ENCODE measurements at regions of chr15 and their contacts with region 1.

Region 1: GRCh38 chr15:61834076-61834697 is 226.1 kb downstream of the VPS13C start:
- DNase-seq: peak; percentile 60 to 78
- ATAC-seq: peak; percentile 60 to 73
- H3K4me3 ChIP-seq: no peak overlapping the region
- H3K27ac ChIP-seq: peak overlapping the region in 1 of 4 donors; percentile 35
- H3K4me1 ChIP-seq: peaks cover 0 to 29% of the 10 kb centered on the region in 2 donors
- H3K27me3 ChIP-seq: no peaks in the 10 kb centered on the region
- CTCF ChIP-seq: peak; percentile 71 to 96 (median 91)
- POLR2A ChIP-seq: no peak

Region 2: GRCh38 chr15:60507596-60508424 is 1326.4 kb before region 1 on chr15:
- in situ Hi-C with region 1: loop called in 1 of 4 experiments (anchors 25 kb)
- intact Hi-C with region 1: no loop called
- DNase-seq: peak; percentile 21 to 40
- ATAC-seq: peak; percentile 76 to 83
- H3K4me3 ChIP-seq: no peak overlapping the region
- H3K27ac ChIP-seq: peak overlapping the region; percentile 54 to 64 (median 60)
- H3K4me1 ChIP-seq: peaks cover 28 to 35% of the 10 kb centered on the region in 2 donors
- H3K27me3 ChIP-seq: no peaks in the 10 kb centered on the region
- CTCF ChIP-seq: peak; percentile 86 to 94 (median 88)
- POLR2A ChIP-seq: no peak

Region 3: GRCh38 chr15:60932051-60932915 is 901.9 kb before region 1 on chr15:
- in situ Hi-C with region 1: loop called in 1 of 4 experiments (anchors 25 kb)
- intact Hi-C with region 1: no loop called
- DNase-seq: peak; percentile 89 to 96
- ATAC-seq: peak; percentile 76 to 94
- H3K4me3 ChIP-seq: no peak overlapping the region
- H3K27ac ChIP-seq: peak overlapping the region; percentile 54 to 83 (median 65)
- H3K4me1 ChIP-seq: peaks cover 52 to 74% of the 10 kb centered on the region in 2 donors
- H3K27me3 ChIP-seq: no peaks in the 10 kb centered on the region
- CTCF ChIP-seq: peak; percentile 28 to 68 (median 62)
- POLR2A ChIP-seq: no peak

Region 4: GRCh38 chr15:61169904-61170695 is 664.1 kb before region 1 on chr15:
- in situ Hi-C with region 1: loop called in 3 of 4 experiments (anchors 10 to 25 kb)
- intact Hi-C with region 1: no loop called
- DNase-seq: no peak
- ATAC-seq: no peak
- H3K4me3 ChIP-seq: no peak overlapping the region
- H3K27ac ChIP-seq: peak overlapping the region in 1 of 4 donors; percentile 8
- H3K4me1 ChIP-seq: peaks cover 27 to 50% of the 10 kb centered on the region in 2 donors
- H3K27me3 ChIP-seq: no peaks in the 10 kb centered on the region
- CTCF ChIP-seq: no peak
- POLR2A ChIP-seq: no peak

Region 5: DNA sequence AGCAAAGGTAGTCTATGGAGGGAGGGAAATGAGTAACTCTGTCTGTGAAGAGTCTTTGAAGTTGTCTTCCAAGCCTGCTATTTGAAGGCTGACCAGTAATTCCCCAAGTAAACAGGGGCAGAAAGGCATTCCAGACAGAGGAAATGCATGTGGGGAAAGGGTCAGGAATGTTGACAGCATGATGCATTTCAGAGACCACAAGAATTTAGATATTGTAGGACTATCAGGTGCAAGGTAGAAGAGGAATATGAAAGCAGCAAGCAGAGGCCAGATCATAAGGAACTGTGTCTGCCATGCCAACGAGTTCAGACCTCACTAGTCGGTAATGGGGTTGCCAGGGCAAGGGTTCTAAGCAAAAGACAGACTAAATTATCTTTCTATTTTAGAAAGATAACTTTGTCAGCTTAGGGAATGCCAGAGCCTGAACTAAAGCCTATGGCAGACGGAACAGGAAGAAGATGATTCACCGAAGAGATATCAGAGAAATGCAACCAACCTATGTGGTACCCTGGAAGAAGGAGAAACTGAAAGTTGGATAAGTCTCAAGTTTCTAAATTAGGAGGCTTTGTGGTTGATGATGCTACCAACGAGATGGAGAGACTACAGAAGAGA is 278.0 kb before region 1 on chr15:
- in situ Hi-C with region 1: loop called in 1 of 4 experiments (anchors 25 kb)
- intact Hi-C with region 1: no loop called
- DNase-seq: no peak
- ATAC-seq: no peak
- H3K4me3 ChIP-seq: no peak overlapping the region
- H3K27ac ChIP-seq: no peak overlapping the region
- H3K4me1 ChIP-seq: peaks cover 0 to 17% of the 10 kb centered on the region in 2 donors
- H3K27me3 ChIP-seq: no peaks in the 10 kb centered on the region
- CTCF ChIP-seq: no peak
- POLR2A ChIP-seq: no peak

Region 6: DNA sequence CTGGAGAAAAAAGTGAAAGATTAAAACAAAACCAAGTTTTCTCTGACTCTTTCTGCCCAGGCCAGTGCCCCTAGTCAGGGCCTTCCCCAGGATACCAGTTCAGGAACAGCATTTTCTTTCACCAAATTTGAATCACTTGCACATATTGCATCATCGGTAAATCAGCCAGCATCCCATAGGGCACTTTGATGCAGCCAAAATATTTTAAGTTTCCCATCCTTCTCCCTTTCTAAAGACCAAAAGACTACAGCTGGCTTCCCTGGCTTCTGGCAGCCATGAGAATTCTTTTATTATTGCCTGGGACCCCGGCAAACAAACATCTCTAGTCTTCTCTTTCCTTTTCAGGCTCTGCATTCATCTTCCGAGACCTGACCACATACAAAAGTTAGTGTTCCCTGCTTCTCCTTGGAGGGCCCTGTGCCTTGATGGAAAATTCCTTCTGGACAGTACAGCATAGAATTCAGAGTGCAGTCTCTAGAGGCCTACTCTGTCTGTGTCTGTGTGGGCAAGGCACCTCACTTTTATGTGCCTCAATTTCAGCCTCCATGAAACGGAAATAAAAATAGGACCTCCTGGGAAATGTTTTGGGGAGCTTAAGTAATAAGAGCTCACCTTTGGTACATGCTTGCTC is 121.9 kb before region 1 on chr15:
- in situ Hi-C with region 1: no loop called
- intact Hi-C with region 1: no loop called
- DNase-seq: no peak
- ATAC-seq: peak in 1 of 2 donors; percentile 61
- H3K4me3 ChIP-seq: no peak overlapping the region
- H3K27ac ChIP-seq: peak overlapping the region in 3 of 4 donors; percentile 17 to 38 (median 22)
- H3K4me1 ChIP-seq: no peaks in the 10 kb centered on the region
- H3K27me3 ChIP-seq: no peaks in the 10 kb centered on the region
- CTCF ChIP-seq: no peak
- POLR2A ChIP-seq: no peak

Region 7: GRCh38 chr15:61764981-61765380 is 69.2 kb before region 1 on chr15:
- in situ Hi-C with region 1: no loop called
- intact Hi-C with region 1: loop called (anchors 5 kb)
- DNase-seq: peak in 1 of 2 donors; percentile 28
- ATAC-seq: peak; percentile 45 to 46
- H3K4me3 ChIP-seq: peak overlapping the region in 2 of 4 donors; percentile 25 to 29
- H3K27ac ChIP-seq: peak overlapping the region; percentile 23 to 87 (median 49)
- H3K4me1 ChIP-seq: peaks cover 19 to 64% of the 10 kb centered on the region in 2 donors
- H3K27me3 ChIP-seq: no peaks in the 10 kb centered on the region
- CTCF ChIP-seq: no peak
- POLR2A ChIP-seq: no peak

Region 8: GRCh38 chr15:61784734-61785133 is 49.5 kb before region 1 on chr15:
- in situ Hi-C with region 1: no loop called
- intact Hi-C with region 1: no loop called
- DNase-seq: no peak
- ATAC-seq: no peak
- H3K4me3 ChIP-seq: no peak overlapping the region
- H3K27ac ChIP-seq: no peak overlapping the region
- H3K4me1 ChIP-seq: no peaks in the 10 kb centered on the region
- H3K27me3 ChIP-seq: no peaks in the 10 kb centered on the region
- CTCF ChIP-seq: no peak
- POLR2A ChIP-seq: no peak